ENCODE measurements at regions of chr11 and their contacts with region 1.

Region 1: DNA sequence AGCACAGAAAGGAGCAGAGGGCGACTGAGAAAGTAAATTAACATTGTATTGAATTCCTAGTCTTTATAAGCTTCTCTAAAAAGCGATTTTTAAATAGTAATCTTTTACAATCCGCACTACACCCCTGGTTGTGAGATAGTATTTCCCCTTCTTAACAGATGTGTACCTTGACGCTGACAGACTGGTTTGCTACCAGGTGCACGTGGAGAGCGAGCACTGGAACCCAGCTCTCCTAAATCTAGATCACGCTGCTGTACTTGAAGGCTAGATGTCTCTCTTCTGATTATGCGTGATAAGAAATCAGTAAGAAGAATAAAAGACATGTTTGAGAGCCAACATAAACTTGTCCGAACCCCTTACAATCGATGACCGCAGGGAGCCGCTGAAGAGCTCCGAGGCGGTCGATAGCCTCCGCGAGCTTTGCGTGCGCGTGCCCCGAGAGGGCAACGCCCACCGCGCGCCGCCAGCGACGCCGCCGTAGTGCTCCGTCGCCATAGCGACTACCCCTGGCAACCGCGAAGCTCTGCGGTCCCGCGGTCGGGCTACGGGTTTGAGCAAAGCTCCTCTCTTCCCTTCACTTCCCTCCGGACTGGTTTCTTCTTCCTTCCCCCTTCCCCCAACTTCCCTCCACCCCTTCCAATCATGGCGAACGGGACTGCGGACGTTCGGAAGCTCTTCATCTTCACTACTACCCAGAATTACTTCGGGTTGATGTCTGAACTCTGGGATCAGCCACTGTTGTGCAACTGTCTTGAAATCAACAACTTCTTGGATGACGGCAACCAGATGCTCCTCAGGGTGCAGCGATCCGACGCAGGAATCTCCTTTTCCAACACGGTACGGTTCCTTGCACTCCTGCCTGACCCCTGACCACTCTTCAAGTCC is at the start of gene DYNC2H1:
- DNase-seq: peak; percentile 92
- total RNA-seq, gene DYNC2H1: 4.7 TPM

Region 2: DNA sequence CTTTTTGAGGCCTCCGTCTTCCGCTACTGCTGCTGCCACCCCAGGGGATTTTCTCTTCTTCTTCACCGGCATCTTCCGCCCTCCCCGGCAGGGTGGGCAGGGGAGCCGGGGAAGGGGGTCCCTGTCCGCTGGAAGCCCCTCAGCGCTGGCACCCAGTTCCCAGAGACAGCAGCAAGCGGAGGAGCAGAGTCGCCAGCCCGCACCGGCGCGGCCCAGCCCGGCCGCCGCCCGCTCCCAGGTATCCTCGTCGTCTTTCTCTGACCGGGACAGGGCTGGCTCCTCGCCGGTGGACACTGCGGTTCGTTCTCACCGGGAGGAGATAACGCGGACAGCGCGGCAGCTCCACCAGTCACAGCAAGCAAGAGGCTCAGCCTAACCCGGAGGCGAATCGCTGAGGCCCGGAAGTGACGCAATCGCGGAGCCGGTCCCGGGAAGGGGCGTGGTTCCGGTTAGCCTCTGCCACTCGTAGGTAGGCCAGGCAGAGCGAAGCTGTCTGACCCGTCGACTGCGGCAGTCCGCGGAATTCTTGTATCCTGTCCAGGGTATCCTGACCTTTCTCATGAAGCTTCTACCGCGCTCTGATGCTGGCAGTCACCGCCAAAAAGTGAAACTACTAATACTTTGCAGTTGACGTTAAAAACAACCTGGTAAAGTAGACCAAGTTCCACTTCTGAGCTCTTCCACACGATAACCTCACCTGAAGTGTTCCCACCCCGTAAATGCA is 17.2 kb before region 1 on chr11 and contains the start of gene DCUN1D5:
- intact Hi-C with region 1: loop called (anchors 2 kb)
- DNase-seq: peak; percentile 99
- total RNA-seq, gene DCUN1D5: 19.9 TPM